ENCODE measurements at regions of chr3 and their contacts with region 1.

Region 1: GRCh38 chr3:161220850-161221753 is at the start of gene NMD3:
- DNase-seq: peak; percentile 97
- ATAC-seq: peak; percentile 98
- H3K4me3 Mint-ChIP-seq: peak within 1 kb of the TSS; percentile 86
- H3K27ac Mint-ChIP-seq: peak within 1 kb of the TSS; percentile 88
- H3K4me1 Mint-ChIP-seq: peaks cover 26% of the 10 kb centered on the region
- H3K27me3 Mint-ChIP-seq: peaks cover 4% of the 10 kb centered on the region
- total RNA-seq, gene NMD3: 49.6 to 65.5 TPM

Region 2: GRCh38 chr3:161291195-161291912 is 70.3 kb after region 1 on chr3:
- CTCF ChIA-PET with region 1: no interaction called
- POLR2A ChIA-PET with region 1: no interaction called
- intact Hi-C with region 1: no loop called
- DNase-seq: no peak
- ATAC-seq: no peak
- H3K4me3 Mint-ChIP-seq: no peak overlapping the region
- H3K27ac Mint-ChIP-seq: no peak overlapping the region
- H3K4me1 Mint-ChIP-seq: no peaks in the 10 kb centered on the region
- H3K27me3 Mint-ChIP-seq: peaks cover 2% of the 10 kb centered on the region

Region 3: DNA sequence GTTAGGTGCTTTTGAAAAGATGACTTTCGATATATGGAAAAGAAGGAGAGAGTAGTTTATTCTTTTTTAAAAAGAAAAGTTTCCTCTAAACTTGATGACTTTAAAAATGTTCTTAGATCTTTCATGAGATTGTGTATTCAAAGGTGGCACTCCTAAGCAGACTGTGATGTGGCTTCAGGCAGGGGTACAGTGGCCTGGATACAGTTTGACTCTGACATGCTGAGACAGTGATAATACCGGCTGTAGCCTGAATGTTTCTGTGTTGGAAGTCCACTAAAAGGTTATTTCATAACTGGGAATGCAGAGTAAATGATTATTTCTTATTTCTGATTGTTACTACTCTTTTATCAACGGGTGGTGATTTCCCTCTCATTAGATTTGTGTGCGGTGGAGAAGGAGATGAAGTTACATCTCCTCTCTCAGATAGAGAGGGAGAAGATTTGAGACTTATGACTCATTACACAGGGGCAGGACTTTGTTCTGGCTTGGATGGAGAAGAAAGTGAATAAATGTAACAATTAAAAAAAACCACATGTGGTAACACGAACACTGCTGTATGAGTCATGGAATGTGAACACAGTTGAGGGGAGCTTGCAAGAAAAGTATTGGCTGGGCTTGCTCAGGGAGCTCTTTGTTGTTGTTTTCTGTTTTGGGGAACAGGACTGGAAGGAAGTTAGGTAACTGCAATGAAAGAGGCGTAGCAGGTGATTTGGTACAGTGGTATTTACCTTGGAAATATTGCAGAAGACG is 128.6 kb after region 1 on chr3:
- CTCF ChIA-PET with region 1: no interaction called
- POLR2A ChIA-PET with region 1: no interaction called
- intact Hi-C with region 1: loop called in 1 of 2 experiments (anchors 5 kb)
- DNase-seq: peak; percentile 32
- ATAC-seq: peak; percentile 90
- H3K4me3 Mint-ChIP-seq: no peak overlapping the region
- H3K27ac Mint-ChIP-seq: no peak overlapping the region
- H3K4me1 Mint-ChIP-seq: peaks cover 28% of the 10 kb centered on the region
- H3K27me3 Mint-ChIP-seq: peaks cover 8% of the 10 kb centered on the region

Measured in activated CD4-positive, alpha-beta T cell treated with anti-CD3 and anti-CD28 coated beads for 36 hours (primary cell).